Activated CD4-positive, alpha-beta memory T cell treated with anti-CD3 and anti-CD28 coated beads, Interleukin-2, amount 10 ng/mL, durations not matched to agents 7 days and 5 days (primary cell): ENCODE measurements at regions of chr3 and their contacts with region 1.

Region 1: DNA sequence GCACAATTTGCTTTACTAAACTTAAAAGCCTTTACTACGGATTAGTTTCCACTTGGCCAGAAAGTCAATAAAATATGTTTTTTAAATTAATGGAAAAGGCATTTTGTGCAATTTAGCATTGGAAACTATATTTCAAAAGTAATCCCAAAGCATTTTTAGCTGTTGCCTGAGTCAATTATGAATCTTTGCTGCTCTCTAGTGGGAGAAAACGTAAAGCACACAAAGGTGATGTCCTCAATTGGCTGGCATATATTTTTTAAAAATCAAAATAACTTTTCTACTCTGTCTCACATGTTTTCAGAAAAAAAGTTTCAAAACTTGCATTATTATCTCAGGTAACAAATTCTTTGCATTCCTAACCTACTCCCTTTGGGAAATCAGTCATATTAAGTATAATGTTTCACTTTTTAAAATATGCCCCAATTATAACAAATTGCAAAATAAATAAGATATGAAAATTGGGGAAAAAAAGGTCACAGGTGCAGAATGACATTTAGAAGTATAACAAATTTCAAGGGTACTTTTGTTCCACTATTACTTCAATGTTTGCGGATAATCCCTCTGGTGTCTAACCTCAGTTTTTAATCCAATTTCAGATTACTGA is 47.2 kb upstream of the TEX55 start:
- DNase-seq: no peak
- H3K4me3 Mint-ChIP-seq: no peak overlapping the region
- H3K27ac Mint-ChIP-seq: no peak overlapping the region
- H3K4me1 Mint-ChIP-seq: no peaks in the 10 kb centered on the region
- H3K27me3 Mint-ChIP-seq: peaks cover 7% of the 10 kb centered on the region

Region 2: DNA sequence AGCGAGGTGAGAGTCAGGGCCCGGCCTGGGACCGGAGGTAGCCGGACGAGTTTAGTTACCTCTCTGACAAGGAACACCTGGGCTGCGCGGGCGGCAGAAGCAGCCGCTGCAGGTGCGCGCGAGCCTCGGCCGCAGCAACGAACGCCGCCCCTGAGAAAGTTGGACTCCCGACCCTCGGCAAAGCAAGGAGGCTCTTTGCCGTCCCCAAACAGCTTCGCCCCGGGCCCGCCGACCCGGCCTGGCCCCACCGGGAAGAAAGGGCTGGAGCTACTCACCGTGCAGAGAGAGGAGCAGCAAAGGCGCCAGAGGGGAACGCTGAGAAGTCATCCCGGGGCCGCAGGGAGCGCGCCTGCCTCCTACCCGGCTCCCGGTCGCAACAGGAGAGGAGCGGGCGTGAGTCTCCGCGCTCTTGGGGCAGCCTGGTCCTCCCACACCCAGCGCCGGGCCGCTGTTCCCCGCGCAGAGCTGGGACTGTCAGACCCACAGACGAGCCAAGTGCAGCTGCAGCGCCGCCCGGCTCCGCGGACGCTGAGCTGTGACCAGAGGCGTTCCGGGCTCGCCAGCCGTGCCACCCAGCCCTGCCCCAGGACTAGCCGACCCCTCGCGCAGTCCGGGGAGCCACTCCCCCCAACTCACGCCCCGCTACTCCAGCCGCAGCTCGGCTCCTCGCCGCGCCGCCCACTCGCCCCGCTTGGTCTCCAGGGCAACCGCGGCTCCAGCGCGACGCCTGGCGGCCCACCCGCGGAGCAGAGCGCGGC is 64.3 kb before region 1 on chr3 and contains the start of gene IGSF11:
- CTCF ChIA-PET with region 1: interaction called, 12 read pairs
- POLR2A ChIA-PET with region 1: no interaction called
- DNase-seq: peak; percentile 53
- H3K4me3 Mint-ChIP-seq: peak within 1 kb of the TSS; percentile 73
- H3K27ac Mint-ChIP-seq: no peak within 1 kb of the TSS
- H3K4me1 Mint-ChIP-seq: peaks cover 11% of the 10 kb centered on the region
- H3K27me3 Mint-ChIP-seq: peaks cover 50% of the 10 kb centered on the region
- total RNA-seq, gene IGSF11: 0.38 TPM in 1 of 2 experiments, not detected in the other